Activated naive CD8-positive, alpha-beta T cell treated with anti-CD3 and anti-CD28 coated beads, Interleukin-2, amount 10 ng/mL, durations not matched to agents 7 days and 5 days (primary cell): ENCODE measurements at regions of chr15 and their contacts with region 1.

Region 1: DNA sequence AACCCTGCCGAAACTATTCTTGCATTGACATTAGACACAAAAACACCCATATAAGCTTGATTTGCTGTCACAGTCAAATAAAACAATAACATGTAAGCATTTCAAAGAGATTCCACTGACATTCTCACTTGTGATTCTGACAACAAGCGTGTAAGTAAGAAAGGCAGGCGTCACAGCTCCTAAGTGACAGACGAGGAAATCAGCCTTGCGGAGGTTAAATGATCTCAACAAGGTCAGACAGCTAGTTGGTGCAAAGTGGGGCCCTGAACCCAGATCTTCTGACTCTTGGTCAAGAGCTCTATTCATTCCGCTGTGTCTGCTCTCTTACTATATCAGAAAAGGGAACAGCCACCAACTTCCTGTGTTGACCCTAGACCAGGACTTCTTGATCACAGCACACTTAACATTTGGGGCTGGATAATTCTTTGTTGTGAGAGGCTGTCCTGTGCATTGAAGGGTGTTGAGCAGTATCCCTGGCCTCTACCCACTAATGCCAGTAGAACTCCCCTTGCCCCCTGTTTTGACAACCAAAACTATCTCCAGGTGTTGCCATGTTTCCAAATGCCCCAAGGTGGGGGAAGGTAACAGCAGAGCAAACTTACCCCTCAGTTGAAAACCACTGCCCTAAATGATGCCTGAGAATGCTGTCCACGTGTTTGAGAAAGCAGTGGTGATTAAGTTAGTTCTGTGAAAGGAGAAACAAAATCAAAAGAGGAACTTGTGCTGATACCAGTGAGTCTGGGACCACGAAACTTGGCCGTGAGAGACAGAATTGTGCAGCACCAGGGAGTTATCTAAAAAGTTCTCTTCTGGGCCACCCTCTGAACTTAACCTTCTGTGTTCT is 86.1 kb downstream of the LIPC start:
- DNase-seq: no peak
- ATAC-seq: peak; percentile 30
- H3K4me3 Mint-ChIP-seq: peak overlapping the region; percentile 59
- H3K27ac Mint-ChIP-seq: peak overlapping the region; percentile 90
- H3K4me1 Mint-ChIP-seq: peaks cover 64% of the 10 kb centered on the region
- H3K27me3 Mint-ChIP-seq: no peaks in the 10 kb centered on the region

Region 2: DNA sequence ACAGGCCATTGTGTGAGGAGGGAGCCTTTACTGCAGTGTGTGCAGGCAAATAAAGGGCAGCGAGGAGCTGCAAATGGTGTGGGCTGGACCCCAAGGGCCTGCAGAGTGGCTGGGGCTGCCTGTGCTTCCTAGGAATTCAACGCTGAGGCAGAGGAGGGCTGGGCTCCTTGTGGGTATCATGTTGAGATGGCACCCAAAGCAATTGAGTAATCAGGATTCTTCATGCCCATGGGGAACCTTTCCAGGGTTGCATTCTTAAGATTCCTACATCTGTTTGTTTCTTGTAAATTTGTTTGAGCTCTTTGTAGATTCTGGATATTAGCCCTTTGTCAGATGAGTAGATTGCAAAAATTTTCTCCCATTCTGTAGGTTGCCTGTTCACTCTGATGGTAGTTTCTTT is 171.5 kb before region 1 on chr15:
- POLR2A ChIA-PET with region 1: no interaction called
- DNase-seq: no peak
- ATAC-seq: no peak
- H3K4me3 Mint-ChIP-seq: no peak overlapping the region
- H3K27ac Mint-ChIP-seq: no peak overlapping the region
- H3K4me1 Mint-ChIP-seq: peaks cover 2% of the 10 kb centered on the region
- H3K27me3 Mint-ChIP-seq: no peaks in the 10 kb centered on the region

Region 3: GRCh38 chr15:58410353-58410752 is 107.6 kb before region 1 on chr15:
- POLR2A ChIA-PET with region 1: interaction called, 19 read pairs
- DNase-seq: peak; percentile 39
- ATAC-seq: peak; percentile 76
- H3K4me3 Mint-ChIP-seq: peak overlapping the region; percentile 89
- H3K27ac Mint-ChIP-seq: peak overlapping the region; percentile 88
- H3K4me1 Mint-ChIP-seq: peaks cover 20% of the 10 kb centered on the region
- H3K27me3 Mint-ChIP-seq: no peaks in the 10 kb centered on the region

Region 4: DNA sequence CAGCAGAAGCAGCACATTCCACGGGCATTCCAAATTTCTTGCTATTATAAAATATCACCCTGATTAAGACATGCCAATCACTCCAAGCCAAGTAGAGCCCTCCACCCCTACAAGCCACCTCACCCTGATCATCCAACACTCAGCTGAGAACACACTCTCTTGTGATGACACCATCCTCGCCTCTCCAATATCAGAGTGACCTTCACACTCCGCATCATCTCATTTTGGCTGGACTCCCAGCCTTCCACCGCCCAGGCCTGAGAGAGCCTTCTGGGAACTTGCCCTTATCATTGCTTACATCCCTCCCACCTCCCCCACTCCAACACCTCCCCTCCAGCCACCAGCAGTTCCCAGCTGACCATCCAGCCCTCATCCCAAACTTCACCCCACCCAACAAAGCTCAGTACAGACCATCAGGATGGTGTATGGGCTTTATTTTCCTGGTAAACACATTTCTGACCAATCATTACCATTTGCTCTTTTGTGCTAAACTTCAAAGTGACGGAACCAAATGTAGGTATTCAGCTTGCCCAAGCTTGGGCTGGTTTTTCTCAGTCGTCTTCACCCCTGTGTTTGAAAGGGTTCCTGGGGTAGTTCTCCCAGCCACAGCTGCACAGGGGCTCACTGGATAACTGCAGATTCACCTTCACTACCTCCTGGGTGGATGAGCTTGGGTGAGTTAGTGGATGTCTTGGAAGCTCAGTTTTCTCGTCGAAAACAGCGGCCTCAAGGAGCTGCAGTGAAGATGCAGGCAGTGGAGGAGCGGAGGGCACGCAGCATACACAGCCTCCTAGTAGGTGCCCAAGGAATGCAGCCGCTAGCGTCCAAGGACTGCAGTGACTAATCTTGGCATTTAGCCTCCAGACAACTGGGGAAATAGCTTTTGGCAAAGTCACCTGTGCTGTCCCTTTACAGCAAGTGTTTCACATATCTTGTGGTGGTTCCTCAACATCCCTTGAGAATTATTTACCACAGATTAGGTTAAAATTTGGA is 29.0 kb after region 1 on chr15:
- POLR2A ChIA-PET with region 1: interaction called, 28 read pairs
- DNase-seq: no peak
- ATAC-seq: no peak
- H3K4me3 Mint-ChIP-seq: peak overlapping the region; percentile 20
- H3K27ac Mint-ChIP-seq: peak overlapping the region; percentile 98
- H3K4me1 Mint-ChIP-seq: peaks cover 46% of the 10 kb centered on the region
- H3K27me3 Mint-ChIP-seq: no peaks in the 10 kb centered on the region

Region 5: GRCh38 chr15:58738046-58738707 is 220.3 kb after region 1 on chr15:
- POLR2A ChIA-PET with region 1: no interaction called
- DNase-seq: no peak
- ATAC-seq: no peak
- H3K4me3 Mint-ChIP-seq: peak overlapping the region; percentile 12
- H3K27ac Mint-ChIP-seq: peak overlapping the region; percentile 31
- H3K4me1 Mint-ChIP-seq: peaks cover 39% of the 10 kb centered on the region
- H3K27me3 Mint-ChIP-seq: no peaks in the 10 kb centered on the region